ENCODE measurements at regions of chr10 and their contacts with region 1.

Region 1: DNA sequence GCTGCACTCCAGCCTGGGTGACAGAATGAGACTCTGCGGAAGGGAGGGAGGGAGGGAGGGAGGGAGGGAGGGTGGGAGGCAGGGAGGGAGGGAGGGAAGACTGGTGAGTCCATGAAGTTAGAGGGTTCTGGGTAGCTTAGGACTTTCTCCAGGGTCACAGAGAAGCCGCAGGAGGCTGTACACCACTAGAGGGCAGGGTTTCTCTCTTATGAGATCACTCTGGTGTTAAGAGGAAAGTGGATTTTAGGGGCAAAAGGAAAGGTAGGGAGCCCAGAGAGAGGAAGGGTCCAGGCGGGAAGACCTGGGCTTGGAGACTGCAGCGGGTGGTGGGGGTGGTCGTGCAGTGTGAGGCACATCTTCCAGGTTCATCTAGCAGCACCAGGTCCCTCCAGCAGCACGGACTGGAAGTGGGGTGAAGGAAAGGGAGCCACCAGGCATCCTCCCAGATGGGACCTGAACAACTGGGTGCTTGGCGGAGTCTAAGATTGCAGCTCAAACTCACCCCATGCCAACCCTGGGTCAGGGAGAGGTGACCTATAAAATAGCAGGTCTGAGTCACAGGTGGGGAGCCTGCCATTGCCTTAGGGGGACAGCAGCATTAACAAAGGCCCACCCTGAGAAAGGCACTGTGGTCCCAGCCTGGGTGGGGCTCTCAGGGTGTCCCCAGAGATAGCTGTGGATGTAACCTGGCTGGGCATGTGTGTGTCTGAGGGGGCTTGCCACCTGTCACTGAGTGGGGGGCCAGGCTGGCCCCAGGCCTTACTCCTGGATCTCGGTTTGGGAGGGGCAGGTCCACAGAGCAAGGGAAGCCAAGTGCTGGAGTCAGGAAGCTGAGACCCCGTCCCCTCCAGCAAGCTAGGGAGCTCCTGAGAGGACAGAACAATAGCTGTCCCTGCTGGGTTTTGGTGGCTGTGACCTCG is 48.5 kb upstream of the SLC29A3 start:
- DNase-seq: no peak

Region 2: DNA sequence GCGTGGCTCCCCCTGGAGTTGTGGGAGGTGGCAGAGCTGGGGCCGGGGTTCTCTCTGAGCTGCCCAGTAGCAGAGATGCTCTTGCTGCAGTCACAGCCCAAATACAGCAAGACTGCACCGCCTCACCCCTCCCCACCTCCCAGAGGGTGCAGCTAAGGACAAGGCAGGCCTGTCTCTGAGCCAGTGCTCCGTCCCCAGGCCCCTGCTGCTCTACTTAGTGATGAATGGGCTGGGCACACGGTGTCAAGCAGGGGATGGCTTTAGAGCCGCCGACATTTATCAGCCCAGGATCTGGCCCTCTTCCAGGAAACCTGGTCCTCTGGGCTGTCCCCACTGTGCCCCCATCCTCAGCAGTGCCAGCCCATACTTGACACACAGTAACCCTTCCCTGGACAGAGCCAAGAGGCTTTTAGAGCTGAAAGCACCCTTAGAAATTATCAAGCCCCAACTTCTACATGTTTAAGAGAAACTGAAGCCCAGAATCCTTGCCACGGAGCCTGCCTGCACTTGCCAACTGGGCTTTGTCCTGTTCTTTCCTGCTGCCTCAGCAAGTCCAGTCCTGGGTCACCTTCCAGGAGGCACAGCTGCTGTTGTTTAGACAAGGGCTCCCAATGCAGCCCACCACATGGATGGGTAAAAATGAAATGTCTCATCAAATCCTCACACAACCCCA is 195.3 kb before region 1 on chr10:
- intact Hi-C with region 1: no loop called
- DNase-seq: peak; percentile 62

Region 3: DNA sequence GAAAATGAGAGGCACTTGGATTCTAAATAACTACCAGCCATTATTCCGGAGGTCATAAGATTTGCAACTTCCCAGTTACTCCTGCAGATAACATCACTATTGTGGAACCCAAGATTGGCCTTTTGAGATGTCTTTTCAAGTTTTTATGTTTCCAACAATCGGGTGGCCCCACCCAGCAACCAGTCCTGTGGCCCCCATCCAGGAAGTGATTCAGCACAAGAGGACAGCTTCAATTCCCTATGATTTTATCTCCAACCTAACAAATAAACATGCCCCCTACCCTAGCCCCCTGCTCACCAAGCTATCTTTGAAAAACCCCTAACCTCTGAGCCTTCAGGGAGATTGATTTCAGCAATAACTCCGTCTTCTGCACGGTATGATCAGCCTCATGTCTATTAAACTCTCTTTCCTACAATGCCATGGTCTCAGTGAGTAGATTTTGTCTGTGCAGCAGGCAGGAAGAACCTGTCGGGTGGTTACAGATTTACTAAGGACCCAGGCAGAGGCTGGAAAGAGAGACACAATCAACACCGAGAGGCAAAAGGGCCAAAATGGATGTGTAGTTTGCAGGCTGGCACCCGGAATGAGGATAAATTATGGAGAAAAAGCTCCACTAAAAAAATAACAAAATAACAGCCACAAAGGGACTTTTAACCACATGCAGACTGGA is 142.1 kb before region 1 on chr10:
- intact Hi-C with region 1: loop called (anchors 5 kb)
- DNase-seq: no peak

Region 4: DNA sequence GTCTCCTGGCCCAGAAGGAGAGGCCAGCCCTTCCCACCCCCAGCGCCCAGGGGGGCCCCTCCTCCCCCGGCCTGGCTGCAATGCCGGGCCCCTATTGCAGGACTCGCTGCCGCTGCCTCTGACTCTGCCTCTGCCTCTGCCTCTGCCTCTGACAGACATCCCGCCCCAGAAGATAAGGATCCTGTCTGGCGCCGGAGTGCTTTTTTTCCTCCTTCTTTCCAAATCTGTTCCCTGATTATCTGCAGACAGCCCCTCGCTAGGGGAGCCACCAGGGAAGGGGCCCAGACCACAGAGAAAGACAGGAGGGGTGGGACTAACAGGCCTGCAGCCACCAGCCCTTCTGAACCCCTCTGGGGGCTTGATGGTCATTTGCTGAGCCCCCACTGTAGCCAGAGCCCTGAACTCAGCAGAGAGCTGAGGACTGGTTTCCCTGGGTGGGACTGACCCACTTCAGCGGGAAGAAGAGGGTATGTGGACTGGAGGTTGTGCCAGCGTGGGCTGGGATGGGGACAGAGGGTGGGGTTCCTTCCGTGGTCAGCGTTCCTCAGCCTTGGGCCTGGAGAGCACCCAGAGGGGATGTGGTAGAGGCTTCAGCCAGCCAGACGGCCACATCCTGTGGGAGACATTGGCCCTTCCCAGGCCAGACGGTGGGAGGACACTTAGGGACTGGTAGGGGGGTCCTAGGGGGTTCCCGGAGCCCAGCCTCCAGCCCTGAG is 35.4 kb before region 1 on chr10:
- intact Hi-C with region 1: loop called (anchors 5 kb)
- DNase-seq: peak; percentile 85

Region 5: GRCh38 chr10:71486484-71487114 is 216.0 kb after region 1 on chr10:
- intact Hi-C with region 1: no loop called
- DNase-seq: no peak